ENCODE measurements at regions of chr10 and their contacts with region 1.

Region 1: DNA sequence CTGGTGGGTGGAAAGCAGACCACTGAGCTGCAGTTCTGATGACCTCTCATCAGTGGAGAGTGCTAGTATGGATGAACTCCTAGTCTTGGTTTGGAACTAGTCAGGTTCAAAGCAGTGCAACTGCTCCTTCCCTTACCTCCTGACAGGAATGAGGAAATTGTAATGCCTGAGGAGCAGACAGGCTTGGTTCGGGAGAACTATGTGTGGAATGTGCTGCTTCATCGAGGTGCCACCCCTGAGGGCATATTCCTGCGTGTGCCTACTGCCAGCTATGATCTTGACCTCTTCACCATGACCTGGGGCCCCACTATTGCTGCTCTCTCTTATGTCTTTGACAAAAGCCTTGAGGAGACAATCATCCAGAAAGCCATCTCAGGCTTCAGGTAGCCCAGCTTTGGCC is 27.4 kb upstream of the NFKB2 start:
- DNase-seq: no peak
- ATAC-seq: no peak
- H3K4me3 ChIP-seq: no peak overlapping the region
- H3K4me3 Mint-ChIP-seq: no peak overlapping the region
- H3K27ac ChIP-seq: no peak overlapping the region
- H3K27ac Mint-ChIP-seq: no peak overlapping the region
- H3K4me1 ChIP-seq: no peaks in the 10 kb centered on the region
- H3K4me1 Mint-ChIP-seq: no peaks in the 10 kb centered on the region
- H3K27me3 ChIP-seq: no peaks in the 10 kb centered on the region
- H3K27me3 Mint-ChIP-seq: no peaks in the 10 kb centered on the region

Region 2: DNA sequence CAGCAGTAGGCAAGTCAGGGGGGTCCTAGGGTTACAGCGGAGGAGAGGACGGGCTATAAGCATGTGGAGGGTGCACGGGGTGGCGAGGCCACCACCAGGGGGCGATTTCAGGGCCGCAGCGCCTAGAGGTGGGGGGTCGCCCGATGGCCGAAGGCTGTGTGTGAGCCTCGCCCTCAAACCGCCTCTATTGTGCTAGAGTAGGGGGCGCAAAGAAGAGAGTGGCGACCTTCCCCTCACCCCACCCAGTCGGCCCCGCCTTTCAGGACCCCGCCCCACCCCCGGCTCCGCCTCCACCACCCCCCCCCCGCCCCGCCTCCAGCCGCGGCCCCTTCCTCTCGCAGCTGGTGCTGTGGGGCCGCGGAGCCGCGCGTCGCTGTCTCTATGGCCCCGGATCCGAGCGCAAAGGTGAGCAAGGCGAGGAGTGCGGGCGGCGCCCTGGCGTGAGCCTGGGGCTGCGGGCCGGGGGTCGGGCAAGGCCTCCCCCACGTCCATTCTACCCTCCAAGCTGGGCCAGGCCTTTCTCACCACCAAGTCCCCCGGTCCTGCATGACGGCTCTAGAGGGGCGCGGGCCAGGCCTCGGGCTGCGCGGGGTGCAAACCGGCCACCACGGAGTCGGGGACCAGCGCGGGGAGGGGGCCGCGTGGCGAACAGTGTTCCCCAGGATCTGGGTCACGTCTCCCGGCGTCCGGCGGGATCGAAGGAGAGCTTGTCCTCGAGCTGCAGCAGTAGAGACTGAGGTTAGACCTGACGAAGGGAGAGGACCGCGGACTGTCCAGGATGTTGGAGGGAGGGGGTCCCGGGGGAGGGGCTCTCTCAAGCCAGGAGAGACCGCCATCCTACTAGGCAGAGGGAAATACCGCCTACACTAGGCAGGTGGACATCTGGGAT is 1398.6 kb before region 1 on chr10 and contains the start of gene SEMA4G:
- CTCF ChIA-PET with region 1: no interaction called
- POLR2A ChIA-PET with region 1: interaction called in 1 of 2 experiments, 12 read pairs
- DNase-seq: peak in 31 of 35 experiments; percentile 7 to 64 (median 32)
- ATAC-seq: peak; percentile 73 to 81 (median 79)
- H3K4me3 ChIP-seq: peak within 1 kb of the TSS; percentile 39 to 67
- H3K4me3 Mint-ChIP-seq: peak within 1 kb of the TSS; percentile 57 to 74 (median 58)
- H3K27ac ChIP-seq: no peak within 1 kb of the TSS
- H3K27ac Mint-ChIP-seq: no peak within 1 kb of the TSS
- H3K4me1 ChIP-seq: peaks cover 3 to 14% of the 10 kb centered on the region in 2 experiments
- H3K4me1 Mint-ChIP-seq: peaks cover 8 to 18% (median 12%) of the 10 kb centered on the region in 3 donors
- H3K27me3 ChIP-seq: peaks cover 0 to 11% of the 10 kb centered on the region in 2 experiments
- H3K27me3 Mint-ChIP-seq: peaks cover 0 to 4% of the 10 kb centered on the region in 2 donors
- total RNA-seq, gene SEMA4G: 1.1 to 2.8 (median 1.4) TPM

Measured in T-cell (primary cell).